ENCODE measurements at regions of chr9 and their contacts with region 1.

Region 1: DNA sequence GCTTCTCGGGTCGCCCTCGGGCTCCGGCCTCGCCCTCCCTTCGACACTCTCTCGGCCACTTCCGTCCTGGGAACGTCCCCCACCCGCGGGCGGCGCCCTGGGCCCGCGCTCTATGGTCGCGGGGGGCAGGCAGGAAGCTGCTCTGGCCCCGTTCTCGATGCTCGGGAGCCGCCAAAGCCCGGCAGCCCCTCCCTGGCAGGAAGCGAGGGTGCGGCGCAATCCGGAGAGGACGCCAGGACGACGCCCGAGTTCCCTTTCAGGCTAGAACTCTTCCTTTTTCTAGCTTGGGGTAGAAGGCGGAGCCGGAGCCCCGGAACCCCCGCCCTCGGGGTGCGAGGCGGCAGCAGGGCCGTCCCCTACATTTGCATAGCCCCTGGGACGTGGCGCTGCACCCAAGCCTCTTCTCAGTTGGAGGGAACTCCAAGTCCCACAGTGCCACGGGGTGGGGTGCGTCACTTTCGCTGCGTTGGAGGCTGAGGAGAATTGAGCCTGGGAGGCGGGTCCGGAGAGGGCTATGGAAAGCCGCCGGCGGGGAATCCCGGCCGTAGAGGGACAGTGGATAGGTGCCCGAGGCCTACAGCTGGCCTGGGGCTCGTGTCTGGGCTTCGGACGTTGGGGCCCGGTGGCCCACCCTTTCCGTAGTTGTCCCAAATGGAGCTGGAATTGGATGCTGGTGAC is at the starts of genes CREB3 and TLN1:
- DNase-seq: peak; percentile 99
- H3K4me3 Mint-ChIP-seq: no peak within 1 kb of the TSS
- H3K27ac Mint-ChIP-seq: no peak within 1 kb of the TSS
- H3K4me1 Mint-ChIP-seq: peaks cover 14% of the 10 kb centered on the region
- H3K27me3 Mint-ChIP-seq: no peaks in the 10 kb centered on the region
- CTCF ChIP-seq: no peak
- total RNA-seq, gene CREB3: 58.7 and 66.2 TPM in 2 replicates
- total RNA-seq, gene TLN1: 224 and 256 TPM in 2 replicates

Region 2: DNA sequence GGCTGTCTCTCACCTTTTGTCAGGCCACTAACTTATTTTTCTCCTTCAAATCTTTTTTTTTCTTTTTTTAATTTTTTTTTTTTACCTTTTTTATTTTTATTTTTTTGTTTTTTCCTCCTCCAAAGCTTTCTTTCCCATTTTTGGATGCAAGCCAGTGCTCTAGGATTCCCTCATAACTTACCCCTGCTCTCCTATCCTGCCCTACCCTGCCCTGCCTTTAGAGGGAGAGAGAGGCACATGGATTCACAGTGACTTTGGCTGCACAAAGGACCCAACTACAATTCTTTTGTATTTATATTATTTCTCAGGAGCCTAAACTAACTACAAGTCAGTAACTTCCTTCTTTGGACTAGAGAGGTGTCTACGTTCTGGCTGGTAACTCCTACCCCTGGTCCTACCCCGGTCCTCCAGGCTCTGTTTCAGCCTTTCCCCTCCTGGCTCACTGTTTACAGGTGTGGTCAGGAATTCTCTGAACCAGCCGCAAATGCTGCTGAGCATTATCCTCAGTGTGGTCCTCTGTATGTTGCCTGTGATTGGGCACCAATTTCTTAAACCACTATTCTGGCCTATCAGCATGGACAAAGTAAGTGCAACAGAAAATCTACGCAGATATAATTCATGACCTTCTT is 250.8 kb before region 1 on chr9:
- CTCF ChIA-PET with region 1: no interaction called
- POLR2A ChIA-PET with region 1: no interaction called
- intact Hi-C with region 1: loop called (anchors 2 kb)
- DNase-seq: peak; percentile 85
- H3K4me3 Mint-ChIP-seq: no peak overlapping the region
- H3K27ac Mint-ChIP-seq: no peak overlapping the region
- H3K4me1 Mint-ChIP-seq: peaks cover 10% of the 10 kb centered on the region
- H3K27me3 Mint-ChIP-seq: no peaks in the 10 kb centered on the region
- CTCF ChIP-seq: peak; percentile 84

Region 3: GRCh38 chr9:35646533-35647265 is 85.6 kb before region 1 on chr9:
- CTCF ChIA-PET with region 1: interaction called, 19 read pairs
- POLR2A ChIA-PET with region 1: interaction called, 23 read pairs
- intact Hi-C with region 1: loop called (anchors 1 kb)
- DNase-seq: peak; percentile 88
- H3K4me3 Mint-ChIP-seq: peak overlapping the region; percentile 77
- H3K27ac Mint-ChIP-seq: peak overlapping the region; percentile 93
- H3K4me1 Mint-ChIP-seq: peaks cover 12% of the 10 kb centered on the region
- H3K27me3 Mint-ChIP-seq: no peaks in the 10 kb centered on the region
- CTCF ChIP-seq: peak; percentile 95

Region 4: GRCh38 chr9:35690431-35691333 is 41.6 kb before region 1 on chr9:
- CTCF ChIA-PET with region 1: interaction called, 136 read pairs
- POLR2A ChIA-PET with region 1: interaction called, 35 read pairs
- intact Hi-C with region 1: loop called (anchors 1 kb)
- DNase-seq: peak; percentile 52
- H3K4me3 Mint-ChIP-seq: peak overlapping the region; percentile 79
- H3K27ac Mint-ChIP-seq: peak overlapping the region; percentile 72
- H3K4me1 Mint-ChIP-seq: peaks cover 24% of the 10 kb centered on the region
- H3K27me3 Mint-ChIP-seq: no peaks in the 10 kb centered on the region
- CTCF ChIP-seq: no peak

Region 5: DNA sequence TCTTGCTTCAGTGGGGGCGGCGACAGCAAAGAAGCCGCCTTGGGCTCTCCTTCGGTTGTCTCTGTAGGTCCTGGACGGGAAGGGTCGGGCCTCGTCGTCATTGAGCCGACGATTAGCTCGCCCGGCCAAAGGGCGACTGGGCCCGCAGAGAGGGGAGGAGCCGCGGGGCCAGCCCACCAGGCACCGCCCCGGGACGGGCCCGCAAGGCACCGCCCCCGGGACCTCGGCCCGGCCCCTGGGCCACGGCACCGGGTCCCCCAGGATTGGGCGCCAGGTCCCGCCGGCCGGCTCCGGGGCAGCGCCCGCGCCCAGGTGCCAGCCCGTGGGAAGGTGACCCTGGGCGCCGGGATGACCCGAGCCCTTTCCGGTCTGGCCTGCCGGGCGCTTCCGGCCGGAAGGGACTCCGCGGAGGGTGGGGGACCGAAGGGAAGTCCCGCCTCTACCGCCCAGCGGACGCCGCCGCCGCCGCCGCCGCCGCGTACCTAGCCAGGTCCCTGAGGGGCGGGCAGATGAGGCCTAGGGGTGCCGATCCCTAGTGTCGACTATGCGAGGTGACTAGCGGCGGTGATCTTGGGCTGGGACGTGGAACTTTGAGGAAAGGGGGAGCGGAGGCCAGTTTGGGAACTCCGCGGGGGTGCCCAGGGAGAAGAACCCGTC is 16.7 kb after region 1 on chr9 and contains the starts of genes GBA2 and RGP1:
- CTCF ChIA-PET with region 1: interaction called, 150 read pairs
- POLR2A ChIA-PET with region 1: interaction called, 284 read pairs
- intact Hi-C with region 1: loop called (anchors 1 kb)
- DNase-seq: peak; percentile 77
- H3K4me3 Mint-ChIP-seq: peak within 1 kb of the TSS; percentile 94
- H3K27ac Mint-ChIP-seq: peak within 1 kb of the TSS; percentile 85
- H3K4me1 Mint-ChIP-seq: peaks cover 31% of the 10 kb centered on the region
- H3K27me3 Mint-ChIP-seq: no peaks in the 10 kb centered on the region
- CTCF ChIP-seq: no peak
- total RNA-seq, gene GBA2: 51.3 and 55.2 TPM in 2 replicates
- total RNA-seq, gene RGP1: 33.8 and 35.8 TPM in 2 replicates

Region 6: DNA sequence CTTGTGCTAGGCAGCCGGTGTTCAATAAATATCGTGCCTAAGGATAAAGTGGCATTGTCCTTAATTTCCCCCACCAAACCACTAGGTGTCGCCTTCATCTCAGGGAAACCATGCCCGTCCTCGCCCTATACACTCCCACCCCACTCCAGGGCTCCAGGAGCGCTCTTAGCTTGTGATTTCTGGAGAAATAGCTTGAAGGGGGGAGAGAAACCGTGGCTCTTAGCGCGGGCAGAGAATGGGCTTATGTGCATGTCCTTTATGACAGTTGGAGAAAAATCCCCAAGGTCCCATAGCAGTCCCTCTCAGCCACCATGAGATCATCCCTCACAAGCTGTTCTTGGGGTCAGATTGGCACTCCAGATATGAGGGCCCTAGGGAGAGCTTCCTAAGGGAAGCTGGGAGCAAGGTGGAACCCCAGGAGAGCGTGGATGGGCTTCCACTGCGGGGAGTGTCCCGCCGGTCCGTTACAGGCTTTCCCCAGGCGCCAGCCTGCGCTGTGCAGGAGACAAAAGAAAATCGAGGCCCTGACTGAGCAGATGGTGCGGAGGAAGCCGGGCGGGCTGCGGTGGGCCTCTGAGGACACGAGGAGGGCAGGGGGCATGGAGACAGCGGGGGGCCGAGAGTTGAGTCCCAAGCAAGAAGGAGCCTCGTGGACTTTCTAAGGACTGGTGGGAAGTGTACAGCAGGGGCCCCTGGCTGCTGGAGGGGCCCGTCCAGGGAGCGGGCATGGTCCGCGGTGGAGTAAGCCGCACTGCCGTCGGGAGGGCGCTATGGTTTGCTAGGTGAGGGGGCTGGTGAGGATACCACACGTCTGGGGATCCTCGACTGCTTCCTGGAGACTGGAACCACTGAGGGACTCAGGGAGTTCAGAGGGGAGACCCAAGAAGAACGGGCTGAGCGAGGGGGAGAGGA is 58.4 kb after region 1 on chr9:
- CTCF ChIA-PET with region 1: interaction called, 12 read pairs
- POLR2A ChIA-PET with region 1: interaction called, 3 read pairs
- intact Hi-C with region 1: loop called (anchors 5 kb)
- DNase-seq: peak; percentile 78
- H3K4me3 Mint-ChIP-seq: no peak overlapping the region
- H3K27ac Mint-ChIP-seq: no peak overlapping the region
- H3K4me1 Mint-ChIP-seq: peaks cover 6% of the 10 kb centered on the region
- H3K27me3 Mint-ChIP-seq: no peaks in the 10 kb centered on the region
- CTCF ChIP-seq: peak; percentile 69

Region 7: GRCh38 chr9:36190388-36191287 is 458.4 kb after region 1 on chr9 and contains the start of gene CLTA:
- CTCF ChIA-PET with region 1: no interaction called
- POLR2A ChIA-PET with region 1: interaction called, 10 read pairs
- intact Hi-C with region 1: no loop called
- DNase-seq: peak; percentile 100
- H3K4me3 Mint-ChIP-seq: peak within 1 kb of the TSS; percentile 83
- H3K27ac Mint-ChIP-seq: peak within 1 kb of the TSS; percentile 92
- H3K4me1 Mint-ChIP-seq: peaks cover 35% of the 10 kb centered on the region
- H3K27me3 Mint-ChIP-seq: no peaks in the 10 kb centered on the region
- CTCF ChIP-seq: peak; percentile 46
- total RNA-seq, gene CLTA: 189 and 218 TPM in 2 replicates